Esophagus muscularis mucosa (tissue), 4 donors: ENCODE measurements at regions of chr10 and their contacts with region 1.

Region 1: DNA sequence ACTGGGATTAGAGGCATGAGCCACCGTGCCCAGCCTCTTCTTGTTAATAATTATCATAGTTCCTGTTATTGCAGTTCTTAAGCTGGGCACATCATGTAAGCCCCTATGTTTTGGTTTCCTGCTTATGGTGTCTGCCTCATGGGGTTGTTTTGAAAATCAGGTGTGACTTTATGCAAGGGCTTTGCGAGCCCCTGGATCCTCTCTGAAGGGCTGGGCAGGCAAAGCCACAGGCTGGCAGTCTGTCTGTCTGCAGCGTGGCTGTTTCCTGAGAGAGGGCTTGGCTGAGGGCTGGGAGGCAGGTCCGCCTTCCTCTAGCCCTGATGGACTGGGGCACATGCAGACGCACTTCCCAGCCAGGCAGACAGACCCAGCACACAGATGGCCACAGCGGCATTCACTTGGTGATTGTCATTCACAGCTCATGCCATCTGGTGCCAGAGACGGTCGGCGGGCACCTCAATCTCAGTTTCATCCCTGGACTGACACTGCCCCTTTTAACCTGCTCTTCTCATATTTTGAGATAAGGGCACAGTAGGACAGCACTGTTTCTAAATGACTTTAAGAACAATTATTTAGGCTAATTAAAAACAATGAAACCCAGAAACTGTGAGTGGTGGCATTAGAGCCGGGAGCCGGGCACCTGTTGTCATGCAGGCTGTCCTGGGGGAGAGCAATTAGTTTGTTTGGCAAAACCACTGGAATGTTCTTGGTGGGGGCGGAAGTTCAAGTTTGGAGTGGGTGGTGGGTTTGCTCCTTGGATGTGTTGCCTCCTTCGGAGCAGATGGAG is 35.5 kb downstream of the RBM20 start:
- DNase-seq: no peak
- H3K4me3 ChIP-seq: no peak overlapping the region
- H3K27ac ChIP-seq: no peak overlapping the region
- H3K4me1 ChIP-seq: peaks cover 0 to 11% (median 3%) of the 10 kb centered on the region in 4 donors
- H3K27me3 ChIP-seq: no peaks in the 10 kb centered on the region
- CTCF ChIP-seq: no peak
- EP300 ChIP-seq: no peak
- POLR2A ChIP-seq: no peak

Region 2: GRCh38 chr10:110613341-110613995 is 66.2 kb before region 1 on chr10:
- intact Hi-C with region 1: loop called (anchors 2 kb)
- DNase-seq: no peak
- H3K4me3 ChIP-seq: no peak overlapping the region
- H3K27ac ChIP-seq: no peak overlapping the region
- H3K4me1 ChIP-seq: peaks cover 0 to 7% (median under 1%) of the 10 kb centered on the region in 4 donors
- H3K27me3 ChIP-seq: no peaks in the 10 kb centered on the region
- CTCF ChIP-seq: no peak
- EP300 ChIP-seq: no peak
- POLR2A ChIP-seq: no peak